B cell (primary cell): ENCODE measurements at regions of chr16 and their contacts with region 1.

Region 1: DNA sequence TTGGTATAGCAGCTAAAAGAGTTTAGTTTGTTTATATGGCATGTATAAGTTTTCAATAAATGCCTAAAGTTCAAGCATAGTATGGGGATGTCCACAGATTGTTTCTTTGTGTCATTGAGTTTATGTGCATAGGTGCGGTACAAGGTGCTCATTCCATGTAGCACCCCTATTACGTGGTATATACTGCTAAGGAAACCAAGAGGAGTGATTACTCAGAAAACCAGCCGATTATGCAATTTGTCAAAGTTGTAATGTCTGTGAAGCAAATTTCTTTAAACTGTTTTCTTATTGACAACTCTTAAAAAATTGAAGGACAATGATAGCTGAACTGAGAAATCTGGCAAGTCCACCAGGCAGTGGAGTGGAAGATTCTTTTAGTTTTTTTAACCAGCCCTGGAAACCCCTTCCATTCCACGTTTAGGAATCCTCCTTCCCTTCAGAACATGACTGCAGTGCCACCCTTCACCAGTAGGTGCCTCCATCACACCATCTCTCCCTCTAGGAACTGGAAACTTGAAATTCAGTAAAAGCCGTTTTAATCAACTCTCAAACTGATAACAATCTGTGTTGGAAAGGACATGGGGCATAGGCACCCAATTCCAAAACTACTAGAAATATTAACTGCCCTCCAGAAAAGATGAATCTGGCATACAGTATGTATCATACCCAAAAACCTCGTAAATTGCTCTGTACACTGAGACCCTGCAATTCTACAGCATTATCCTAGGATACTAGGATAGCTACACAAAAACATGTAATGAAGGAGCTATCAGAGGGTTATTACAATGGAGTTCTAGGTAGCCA is 43.5 kb downstream of the REXO5 start:
- DNase-seq: peak; percentile 73
- ATAC-seq: peak; percentile 69
- H3K4me3 ChIP-seq: no peak overlapping the region
- H3K4me3 Mint-ChIP-seq: no peak overlapping the region
- H3K27ac ChIP-seq: no peak overlapping the region
- H3K27ac Mint-ChIP-seq: no peak overlapping the region
- H3K4me1 ChIP-seq: peaks cover 0 to 3% of the 10 kb centered on the region in 2 donors
- H3K4me1 Mint-ChIP-seq: peaks cover 4% of the 10 kb centered on the region
- H3K27me3 ChIP-seq: no peaks in the 10 kb centered on the region
- H3K27me3 Mint-ChIP-seq: no peaks in the 10 kb centered on the region
- CTCF ChIP-seq: peak; percentile 100

Region 2: GRCh38 chr16:20874088-20874581 is 24.3 kb after region 1 on chr16:
- CTCF ChIA-PET with region 1: interaction called, 46 read pairs
- POLR2A ChIA-PET with region 1: no interaction called
- intact Hi-C with region 1: no loop called
- DNase-seq: no peak
- ATAC-seq: no peak
- H3K4me3 ChIP-seq: peak overlapping the region in 3 of 5 experiments; percentile 38 to 61 (median 41)
- H3K4me3 Mint-ChIP-seq: peak overlapping the region; percentile 51
- H3K27ac ChIP-seq: peak overlapping the region; percentile 57 to 62
- H3K27ac Mint-ChIP-seq: peak overlapping the region; percentile 85
- H3K4me1 ChIP-seq: peaks cover 26 to 27% of the 10 kb centered on the region in 2 donors
- H3K4me1 Mint-ChIP-seq: peaks cover 31% of the 10 kb centered on the region
- H3K27me3 ChIP-seq: no peaks in the 10 kb centered on the region
- H3K27me3 Mint-ChIP-seq: no peaks in the 10 kb centered on the region
- CTCF ChIP-seq: no peak

Region 3: GRCh38 chr16:21001262-21001661 is 151.5 kb after region 1 on chr16:
- CTCF ChIA-PET with region 1: interaction called, 8 read pairs
- POLR2A ChIA-PET with region 1: no interaction called
- intact Hi-C with region 1: loop called (anchors 1 kb)
- DNase-seq: no peak
- ATAC-seq: no peak
- H3K4me3 ChIP-seq: no peak overlapping the region
- H3K4me3 Mint-ChIP-seq: no peak overlapping the region
- H3K27ac ChIP-seq: no peak overlapping the region
- H3K27ac Mint-ChIP-seq: no peak overlapping the region
- H3K4me1 ChIP-seq: no peaks in the 10 kb centered on the region
- H3K4me1 Mint-ChIP-seq: no peaks in the 10 kb centered on the region
- H3K27me3 ChIP-seq: peaks cover 0 to 2% (median 0%) of the 10 kb centered on the region in 4 experiments
- H3K27me3 Mint-ChIP-seq: peaks cover 23% of the 10 kb centered on the region
- CTCF ChIP-seq: peak; percentile 21

Region 4: GRCh38 chr16:21083729-21084268 is 234.0 kb after region 1 on chr16:
- CTCF ChIA-PET with region 1: interaction called, 51 read pairs
- POLR2A ChIA-PET with region 1: no interaction called
- intact Hi-C with region 1: loop called (anchors 1 kb)
- DNase-seq: peak; percentile 51
- ATAC-seq: peak; percentile 41
- H3K4me3 ChIP-seq: no peak overlapping the region
- H3K4me3 Mint-ChIP-seq: no peak overlapping the region
- H3K27ac ChIP-seq: no peak overlapping the region
- H3K27ac Mint-ChIP-seq: no peak overlapping the region
- H3K4me1 ChIP-seq: no peaks in the 10 kb centered on the region
- H3K4me1 Mint-ChIP-seq: no peaks in the 10 kb centered on the region
- H3K27me3 ChIP-seq: peaks cover 0 to 6% (median 0%) of the 10 kb centered on the region in 4 experiments
- H3K27me3 Mint-ChIP-seq: peaks cover 12% of the 10 kb centered on the region
- CTCF ChIP-seq: peak; percentile 61

Region 5: DNA sequence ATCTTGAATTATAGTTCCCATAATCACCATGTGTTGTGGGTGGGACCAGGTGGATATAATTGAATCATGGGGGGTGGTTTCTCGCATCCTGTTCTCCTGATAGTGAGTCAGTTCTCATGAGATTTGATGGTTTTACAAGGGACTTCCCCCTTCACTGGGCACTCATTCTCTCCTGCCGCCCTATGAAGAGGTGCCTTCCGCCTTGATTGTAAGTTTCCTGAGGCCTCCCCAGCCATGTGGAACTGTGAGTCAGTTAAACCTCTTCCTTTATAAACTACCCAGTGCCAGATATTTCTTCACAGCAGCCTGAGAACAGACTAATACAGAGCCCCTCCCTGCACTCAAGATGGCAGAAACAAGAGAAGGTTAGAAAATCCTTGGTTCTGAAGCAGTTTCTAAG is 335.0 kb after region 1 on chr16:
- CTCF ChIA-PET with region 1: interaction called, 12 read pairs
- POLR2A ChIA-PET with region 1: no interaction called
- intact Hi-C with region 1: no loop called
- DNase-seq: peak; percentile 48
- ATAC-seq: peak; percentile 47
- H3K4me3 ChIP-seq: no peak overlapping the region
- H3K4me3 Mint-ChIP-seq: no peak overlapping the region
- H3K27ac ChIP-seq: peak overlapping the region; percentile 8 to 12
- H3K27ac Mint-ChIP-seq: peak overlapping the region; percentile 82
- H3K4me1 ChIP-seq: peaks cover 7 to 15% of the 10 kb centered on the region in 2 donors
- H3K4me1 Mint-ChIP-seq: peaks cover 19% of the 10 kb centered on the region
- H3K27me3 ChIP-seq: no peaks in the 10 kb centered on the region
- H3K27me3 Mint-ChIP-seq: no peaks in the 10 kb centered on the region
- CTCF ChIP-seq: no peak